WTC11 (cell line): ENCODE measurements at regions of chr16 and their contacts with region 1.

Region 1: GRCh38 chr16:66608241-66609138 is 4.0 kb downstream of the CMTM3 start:
- DNase-seq: peak; percentile 94
- ATAC-seq: peak; percentile 54
- H3K4me3 Mint-ChIP-seq: no peak overlapping the region
- H3K27ac Mint-ChIP-seq: peak overlapping the region; percentile 84; the same call in 1 of the 2 replicates
- H3K4me1 Mint-ChIP-seq: peaks cover 26% of the 10 kb centered on the region
- H3K27me3 Mint-ChIP-seq: no peaks in the 10 kb centered on the region
- CTCF ChIP-seq: peak; percentile 75

Region 2: GRCh38 chr16:66474750-66475199 is 133.7 kb before region 1 on chr16:
- CTCF ChIA-PET with region 1: interaction called, 10 read pairs
- POLR2A ChIA-PET with region 1: no interaction called
- DNase-seq: no peak
- ATAC-seq: no peak
- H3K4me3 Mint-ChIP-seq: no peak overlapping the region
- H3K27ac Mint-ChIP-seq: no peak overlapping the region
- H3K4me1 Mint-ChIP-seq: peaks cover 30% of the 10 kb centered on the region
- H3K27me3 Mint-ChIP-seq: peaks cover 8% of the 10 kb centered on the region; the same call in 1 of the 2 replicates
- CTCF ChIP-seq: no peak

Region 3: DNA sequence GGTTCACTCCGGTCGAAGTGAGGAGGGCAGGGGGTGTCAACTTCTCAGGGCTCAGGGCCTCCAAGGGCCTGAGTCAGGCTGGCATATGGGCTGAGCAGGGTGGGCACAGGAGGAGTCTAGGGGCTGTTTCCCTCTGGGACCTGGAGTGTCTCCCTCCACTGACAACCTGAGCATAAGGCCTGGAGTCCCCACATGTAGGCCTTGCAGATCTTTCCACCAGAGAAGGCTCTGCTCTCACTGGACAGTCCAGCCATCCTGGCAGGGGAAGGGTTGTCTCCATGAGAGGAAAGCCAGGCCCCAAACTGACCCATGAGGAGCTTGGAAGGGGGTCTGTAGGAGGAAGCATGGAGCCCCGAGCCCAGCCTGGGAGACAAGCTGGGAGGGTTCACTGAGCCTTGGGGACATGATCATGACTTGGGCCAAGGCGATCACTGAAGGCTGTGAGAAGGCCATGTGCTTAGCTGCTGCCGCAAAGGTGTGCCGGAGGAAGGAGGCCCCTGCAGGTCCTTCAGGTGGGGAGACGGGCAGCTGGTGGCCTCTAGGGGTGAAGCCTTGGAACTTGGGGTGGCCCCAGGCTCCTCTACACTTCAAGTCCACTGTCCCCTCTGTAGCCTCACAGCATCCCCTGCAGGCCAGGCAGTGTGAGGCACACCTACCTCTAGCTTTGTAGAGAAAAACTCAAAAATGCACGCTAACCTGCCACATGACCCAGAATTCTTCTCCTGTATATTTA is 19.3 kb before region 1 on chr16:
- CTCF ChIA-PET with region 1: interaction called, 16 read pairs
- POLR2A ChIA-PET with region 1: no interaction called
- DNase-seq: peak; percentile 79
- ATAC-seq: peak; percentile 99
- H3K4me3 Mint-ChIP-seq: no peak overlapping the region
- H3K27ac Mint-ChIP-seq: no peak overlapping the region; the same call in 1 of the 2 replicates
- H3K4me1 Mint-ChIP-seq: peaks cover 17% of the 10 kb centered on the region
- H3K27me3 Mint-ChIP-seq: no peaks in the 10 kb centered on the region
- CTCF ChIP-seq: peak; percentile 42; the same call in 1 of the 2 replicates

Region 4: DNA sequence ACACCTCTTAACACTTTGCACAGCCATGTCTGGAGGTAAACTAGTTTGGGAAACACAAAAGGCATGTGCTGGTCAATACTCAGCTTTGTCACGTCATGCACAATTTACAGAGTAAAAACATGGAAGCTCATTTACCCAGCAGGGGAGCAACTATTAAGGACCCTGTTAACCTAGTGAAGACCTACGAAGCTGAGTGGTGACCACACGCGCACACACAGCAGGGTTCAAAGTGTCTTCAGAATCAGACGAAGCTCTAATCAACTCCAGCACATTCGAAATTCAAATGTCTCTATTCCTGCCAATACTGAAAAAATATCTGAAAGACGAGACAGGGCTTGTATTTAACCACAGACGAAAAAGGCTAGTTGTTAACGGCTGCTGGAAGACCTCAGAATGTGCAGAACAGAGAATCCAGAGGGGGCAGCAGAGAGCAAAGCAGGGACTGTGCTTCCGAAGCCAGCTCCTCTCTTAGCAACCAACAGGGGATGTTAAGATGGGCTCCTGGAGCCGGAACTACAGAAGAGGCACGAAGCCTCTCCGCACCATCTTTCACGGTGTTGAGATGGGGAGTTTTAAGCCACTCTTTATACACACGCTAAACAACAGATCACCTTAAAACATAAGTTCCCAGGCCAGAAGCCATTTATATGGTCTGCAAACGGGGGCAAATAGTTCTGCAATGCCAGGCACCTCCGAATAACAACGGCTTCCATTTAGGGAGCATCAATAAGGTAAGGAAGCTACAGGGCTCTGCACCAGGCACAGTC is 42.4 kb after region 1 on chr16:
- CTCF ChIA-PET with region 1: interaction called, 70 read pairs
- POLR2A ChIA-PET with region 1: interaction called, 6 read pairs
- DNase-seq: peak; percentile 88
- ATAC-seq: peak; percentile 97
- H3K4me3 Mint-ChIP-seq: peak overlapping the region; percentile 55
- H3K27ac Mint-ChIP-seq: 0 out of 2 replicates have a peak overlapping the region, but pooled peaks have one; percentile 37
- H3K4me1 Mint-ChIP-seq: peaks cover 18% of the 10 kb centered on the region
- H3K27me3 Mint-ChIP-seq: no peaks in the 10 kb centered on the region
- CTCF ChIP-seq: peak; percentile 80

Region 5: GRCh38 chr16:66740010-66740409 is 131.5 kb after region 1 on chr16:
- CTCF ChIA-PET with region 1: interaction called, 11 read pairs
- POLR2A ChIA-PET with region 1: no interaction called
- DNase-seq: peak; percentile 40
- ATAC-seq: peak; percentile 85
- H3K4me3 Mint-ChIP-seq: no peak overlapping the region
- H3K27ac Mint-ChIP-seq: peak overlapping the region; percentile 90
- H3K4me1 Mint-ChIP-seq: peaks cover 18% of the 10 kb centered on the region
- H3K27me3 Mint-ChIP-seq: no peaks in the 10 kb centered on the region
- CTCF ChIP-seq: peak; percentile 61

Region 6: DNA sequence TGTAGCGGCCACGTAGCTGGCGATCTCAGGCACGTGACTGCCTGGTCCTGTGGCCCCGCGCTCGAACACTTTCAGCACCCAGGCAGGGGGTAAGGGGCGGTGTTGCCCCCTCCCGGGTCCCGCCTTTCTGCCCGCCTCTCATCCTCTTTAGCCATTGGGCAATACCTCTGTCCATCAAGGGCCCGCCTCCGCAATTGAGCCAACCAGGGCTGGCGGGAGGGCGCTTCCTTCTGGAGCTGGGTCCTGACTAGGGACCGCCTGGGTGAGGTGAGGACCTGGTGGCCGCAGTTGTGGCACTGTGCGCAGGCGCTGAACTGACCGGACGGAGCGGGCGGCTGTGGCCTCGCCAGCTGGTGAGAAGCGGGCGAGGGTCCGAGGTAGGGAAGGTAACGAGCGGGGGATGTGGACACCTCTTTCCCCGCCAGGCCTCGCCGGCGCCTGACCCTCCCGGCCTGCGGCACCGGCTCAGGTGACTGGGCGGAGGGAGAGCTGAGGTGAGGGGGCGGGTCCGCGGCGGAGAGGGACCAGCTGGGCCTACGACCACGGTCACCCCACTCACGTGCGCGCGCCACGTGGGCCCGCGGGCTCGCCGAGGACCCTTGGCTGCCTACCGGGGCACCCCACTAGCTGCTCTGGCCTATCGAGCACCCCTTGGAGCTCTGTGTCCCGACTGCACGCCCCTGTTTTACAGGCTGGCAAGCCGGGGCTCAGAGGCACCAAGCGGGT is 272.0 kb after region 1 on chr16 and contains the start of gene PDP2:
- CTCF ChIA-PET with region 1: interaction called, 13 read pairs
- POLR2A ChIA-PET with region 1: no interaction called
- DNase-seq: peak; percentile 97
- ATAC-seq: peak; percentile 99
- H3K4me3 Mint-ChIP-seq: peak within 1 kb of the TSS; percentile 95
- H3K27ac Mint-ChIP-seq: peak within 1 kb of the TSS; percentile 93
- H3K4me1 Mint-ChIP-seq: peaks cover 9% of the 10 kb centered on the region
- H3K27me3 Mint-ChIP-seq: peaks cover 11% of the 10 kb centered on the region
- CTCF ChIP-seq: no peak
- total RNA-seq, gene PDP2: 26.4 to 28.4 TPM (median 27.0 TPM) in 3 replicates